Tibial artery (tissue), 4 donors: ENCODE measurements at regions of chr7 and their contacts with region 1.

Region 1: DNA sequence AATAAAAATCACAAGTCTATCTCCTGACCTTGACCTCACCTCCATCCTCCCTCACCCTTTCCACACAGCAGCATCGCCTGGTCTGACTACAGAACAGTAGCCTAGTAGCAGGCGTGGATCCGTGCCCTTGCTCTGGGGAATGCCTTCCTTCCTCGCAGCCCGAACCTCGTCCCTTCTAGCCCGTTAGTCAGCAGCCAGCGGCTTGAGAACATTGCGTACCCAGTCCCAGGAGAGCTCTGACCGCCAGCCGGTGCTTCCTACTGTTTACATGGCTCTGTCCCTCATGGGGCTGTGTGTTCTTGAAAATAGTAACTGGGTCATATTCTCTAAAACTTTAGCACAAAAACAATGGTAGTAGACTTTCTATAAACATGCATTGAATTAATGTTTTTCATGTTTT is 682.7 kb upstream of the IGFBP3 start:
- DNase-seq: peak; percentile 98
- H3K4me3 ChIP-seq: no peak overlapping the region
- H3K27ac ChIP-seq: peak overlapping the region; percentile 70 to 86
- H3K4me1 ChIP-seq: peaks cover 0 to 33% (median 15%) of the 10 kb centered on the region in 4 donors
- H3K27me3 ChIP-seq: no peaks in the 10 kb centered on the region
- CTCF ChIP-seq: no peak

Region 2: GRCh38 chr7:46752881-46753366 is 149.1 kb after region 1 on chr7:
- intact Hi-C with region 1: loop called (anchors 5 kb)
- DNase-seq: no peak
- H3K4me3 ChIP-seq: no peak overlapping the region
- H3K27ac ChIP-seq: peak overlapping the region; percentile 74 to 80
- H3K4me1 ChIP-seq: peaks cover 0 to 72% (median 40%) of the 10 kb centered on the region in 4 donors
- H3K27me3 ChIP-seq: no peaks in the 10 kb centered on the region
- CTCF ChIP-seq: no peak